ENCODE measurements at regions of chr6 and their contacts with region 1.

Region 1: GRCh38 chr6:167826230-167826895 is 348 bp upstream of the AFDN start:
- DNase-seq: peak; percentile 91
- H3K4me3 ChIP-seq: peak overlapping the region; percentile 66 to 80 (median 72)
- H3K27ac ChIP-seq: peak overlapping the region; percentile 66 to 74 (median 70)
- H3K4me1 ChIP-seq: peaks cover 0 to 48% (median 23%) of the 10 kb centered on the region in 4 donors
- H3K27me3 ChIP-seq: no peaks in the 10 kb centered on the region
- CTCF ChIP-seq: peak; percentile 38 to 58 (median 45)
- EP300 ChIP-seq: no peak
- POLR2A ChIP-seq: no peak

Region 2: GRCh38 chr6:167855825-167856425 is 29.6 kb after region 1 on chr6:
- intact Hi-C with region 1: loop called (anchors 2 kb)
- DNase-seq: peak; percentile 73
- H3K4me3 ChIP-seq: no peak overlapping the region
- H3K27ac ChIP-seq: peak overlapping the region; percentile 61 to 84 (median 70)
- H3K4me1 ChIP-seq: peaks cover 0 to 88% (median 72%) of the 10 kb centered on the region in 4 donors
- H3K27me3 ChIP-seq: no peaks in the 10 kb centered on the region
- CTCF ChIP-seq: no peak
- EP300 ChIP-seq: peak; percentile 73 to 91 (median 76)
- POLR2A ChIP-seq: no peak

Region 3: GRCh38 chr6:167898673-167899311 is 72.4 kb after region 1 on chr6:
- intact Hi-C with region 1: loop called (anchors 5 kb)
- DNase-seq: no peak
- H3K4me3 ChIP-seq: no peak overlapping the region
- H3K27ac ChIP-seq: no peak overlapping the region
- H3K4me1 ChIP-seq: no peaks in the 10 kb centered on the region
- H3K27me3 ChIP-seq: no peaks in the 10 kb centered on the region
- CTCF ChIP-seq: peak; percentile 53 to 73 (median 68)
- EP300 ChIP-seq: no peak
- POLR2A ChIP-seq: no peak

Measured in sigmoid colon (tissue), 7 donors.